ENCODE measurements at regions of chr14 and their contacts with region 1.

Region 1: DNA sequence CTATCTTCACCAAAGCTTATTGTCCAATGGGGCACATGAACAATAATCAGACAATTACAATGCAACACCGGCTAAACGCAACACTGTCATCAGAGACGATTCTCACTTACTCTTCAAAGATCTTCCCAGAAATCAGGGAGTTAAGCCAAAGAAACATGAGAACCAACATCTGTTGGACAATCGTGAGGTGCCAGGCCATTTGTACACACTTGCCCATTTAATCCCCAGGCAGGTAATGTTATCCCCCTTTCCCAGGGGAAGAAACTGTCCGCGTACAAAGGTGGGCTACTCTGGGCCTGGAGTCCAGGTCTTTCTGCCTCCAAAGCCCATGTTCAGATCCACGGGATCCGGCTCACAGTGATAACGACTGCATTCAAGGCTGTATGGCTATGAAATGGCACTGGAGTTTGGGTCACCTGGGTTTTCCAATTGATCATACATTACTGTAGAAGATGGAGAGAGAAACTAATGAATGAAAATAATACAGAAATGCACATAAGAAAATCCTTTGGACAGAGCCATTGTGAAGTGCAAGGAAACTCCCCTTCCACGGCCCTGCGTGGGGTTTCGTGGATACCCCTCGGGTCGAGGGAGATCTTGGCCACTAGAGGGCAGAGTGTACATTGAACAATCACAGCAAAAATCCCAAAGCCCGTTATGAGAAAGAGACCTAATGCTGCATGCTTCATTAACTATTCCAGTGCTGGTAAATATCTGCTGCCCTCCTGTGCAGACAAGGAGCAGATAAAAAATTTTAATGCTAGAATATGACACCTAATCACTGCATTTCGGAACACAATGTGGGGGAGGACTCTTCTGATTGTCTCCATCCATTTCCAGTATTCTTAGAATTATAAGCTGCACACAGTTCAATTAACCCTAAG is 111.4 kb downstream of the EGLN3 start:
- DNase-seq: peak; percentile 50 to 62 (median 52)
- ATAC-seq: peak; percentile 68
- H3K4me3 ChIP-seq: no peak overlapping the region
- H3K27ac ChIP-seq: no peak overlapping the region
- H3K4me1 ChIP-seq: peaks cover 6% of the 10 kb centered on the region
- H3K27me3 ChIP-seq: no peaks in the 10 kb centered on the region
- CTCF ChIP-seq: peak; percentile 70 to 80 (median 75)
- POLR2A ChIP-seq: no peak

Region 2: GRCh38 chr14:33184587-33184986 is 654.8 kb before region 1 on chr14:
- intact Hi-C with region 1: no loop called
- DNase-seq: no peak
- ATAC-seq: no peak
- H3K4me3 ChIP-seq: no peak overlapping the region
- H3K27ac ChIP-seq: no peak overlapping the region
- H3K4me1 ChIP-seq: no peaks in the 10 kb centered on the region
- H3K27me3 ChIP-seq: no peaks in the 10 kb centered on the region
- CTCF ChIP-seq: peak in 1 of 7 experiments; percentile 6
- POLR2A ChIP-seq: no peak

Region 3: DNA sequence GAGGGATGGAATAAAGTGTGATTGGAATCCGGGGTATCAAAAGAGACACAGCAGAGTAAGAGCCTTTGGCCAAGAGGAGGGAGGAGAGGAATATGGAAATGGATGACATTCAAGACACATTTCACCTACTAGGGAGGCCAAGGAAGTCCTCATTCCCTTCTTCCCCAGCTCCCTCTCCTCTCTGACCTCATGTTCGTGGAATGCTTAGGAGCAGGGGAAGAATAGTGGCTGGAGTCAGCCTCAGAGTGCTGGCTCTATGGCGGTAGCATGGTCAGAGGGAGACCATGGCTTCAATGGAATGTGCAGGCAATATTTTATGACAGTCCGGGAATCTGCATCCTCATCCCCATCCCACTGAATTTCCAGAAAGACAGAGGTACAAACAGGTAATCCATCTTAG is 85.2 kb before region 1 on chr14:
- intact Hi-C with region 1: no loop called
- DNase-seq: no peak
- ATAC-seq: no peak
- H3K4me3 ChIP-seq: no peak overlapping the region
- H3K27ac ChIP-seq: no peak overlapping the region
- H3K4me1 ChIP-seq: no peaks in the 10 kb centered on the region
- H3K27me3 ChIP-seq: no peaks in the 10 kb centered on the region
- CTCF ChIP-seq: no peak
- POLR2A ChIP-seq: no peak

Region 4: GRCh38 chr14:34098045-34098984 is 258.9 kb after region 1 on chr14:
- intact Hi-C with region 1: loop called (anchors 5 kb)
- DNase-seq: peak; percentile 35 to 44 (median 37)
- ATAC-seq: peak; percentile 63
- H3K4me3 ChIP-seq: no peak overlapping the region
- H3K27ac ChIP-seq: no peak overlapping the region
- H3K4me1 ChIP-seq: no peaks in the 10 kb centered on the region
- H3K27me3 ChIP-seq: no peaks in the 10 kb centered on the region
- CTCF ChIP-seq: peak; percentile 20 to 75 (median 65)
- POLR2A ChIP-seq: no peak

Region 5: DNA sequence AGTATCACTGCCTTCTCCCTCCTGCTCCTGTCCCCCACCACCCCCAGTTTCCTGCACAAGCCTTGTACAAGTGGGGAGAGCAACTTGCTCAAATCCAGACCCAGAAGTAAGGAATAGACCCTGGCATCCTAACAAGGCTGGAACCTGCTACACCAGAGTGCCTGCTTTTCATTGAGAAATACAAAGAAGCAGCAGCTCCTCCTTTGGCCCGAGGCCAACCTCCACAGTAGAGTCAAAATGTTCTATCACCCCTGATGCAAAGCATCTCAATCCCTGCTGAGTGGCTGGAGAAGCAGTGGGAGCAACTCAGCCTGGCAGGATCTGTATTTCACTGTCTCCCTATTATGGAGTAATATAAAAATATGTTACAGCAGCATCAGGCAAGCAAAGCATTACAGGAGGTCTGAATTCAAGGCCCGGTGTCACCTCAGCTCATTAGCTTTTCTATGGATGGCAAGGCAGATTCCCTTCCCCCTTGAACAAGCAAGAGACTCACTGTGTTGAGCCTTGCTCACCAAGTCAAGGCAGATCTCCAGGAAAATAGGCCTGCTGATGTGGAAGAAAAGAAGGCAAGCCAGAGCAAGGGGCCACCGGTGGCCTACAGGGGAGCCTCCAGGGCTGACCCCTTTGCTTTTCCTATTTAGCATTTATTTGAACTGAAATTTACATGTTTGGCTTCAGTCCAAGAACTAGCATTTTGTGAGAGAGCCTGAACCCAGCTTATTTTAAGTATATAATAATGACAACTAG is 297.7 kb after region 1 on chr14:
- intact Hi-C with region 1: no loop called
- DNase-seq: no peak
- ATAC-seq: no peak
- H3K4me3 ChIP-seq: no peak overlapping the region
- H3K27ac ChIP-seq: no peak overlapping the region
- H3K4me1 ChIP-seq: peaks cover 8% of the 10 kb centered on the region
- H3K27me3 ChIP-seq: no peaks in the 10 kb centered on the region
- CTCF ChIP-seq: no peak
- POLR2A ChIP-seq: no peak

Region 6: GRCh38 chr14:34237081-34237480 is 397.6 kb after region 1 on chr14:
- intact Hi-C with region 1: loop called (anchors 10 kb)
- DNase-seq: no peak
- ATAC-seq: no peak
- H3K4me3 ChIP-seq: no peak overlapping the region
- H3K27ac ChIP-seq: no peak overlapping the region
- H3K4me1 ChIP-seq: no peaks in the 10 kb centered on the region
- H3K27me3 ChIP-seq: no peaks in the 10 kb centered on the region
- CTCF ChIP-seq: no peak
- POLR2A ChIP-seq: no peak

Region 7: DNA sequence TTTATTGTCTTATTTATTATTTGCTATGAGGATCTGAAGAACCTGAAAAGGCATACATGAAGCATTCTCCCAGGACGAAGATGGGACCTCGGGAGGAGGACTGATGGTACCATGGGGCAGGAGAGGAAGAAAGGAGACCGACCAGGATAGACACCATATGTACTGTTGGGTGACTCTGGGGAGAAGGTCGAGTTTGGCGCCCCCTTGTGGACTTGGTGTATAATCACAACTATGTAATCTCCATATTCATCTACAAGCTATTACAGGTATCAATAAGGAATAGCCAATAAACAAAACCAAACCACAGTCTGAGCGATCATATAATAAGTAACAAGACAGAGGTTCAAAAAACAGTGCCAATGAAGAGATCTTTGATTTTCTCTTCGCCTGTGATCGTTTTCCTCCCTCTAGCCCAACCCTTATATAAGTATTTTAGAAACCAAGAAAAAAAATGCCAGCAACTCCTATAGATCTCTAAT is 483.5 kb after region 1 on chr14:
- intact Hi-C with region 1: loop called (anchors 10 kb)
- DNase-seq: peak; percentile 52 to 72 (median 62)
- ATAC-seq: peak; percentile 85
- H3K4me3 ChIP-seq: no peak overlapping the region
- H3K27ac ChIP-seq: no peak overlapping the region
- H3K4me1 ChIP-seq: peaks cover 5% of the 10 kb centered on the region
- H3K27me3 ChIP-seq: no peaks in the 10 kb centered on the region
- CTCF ChIP-seq: peak; percentile 34 to 70 (median 65)
- POLR2A ChIP-seq: no peak

Region 8: DNA sequence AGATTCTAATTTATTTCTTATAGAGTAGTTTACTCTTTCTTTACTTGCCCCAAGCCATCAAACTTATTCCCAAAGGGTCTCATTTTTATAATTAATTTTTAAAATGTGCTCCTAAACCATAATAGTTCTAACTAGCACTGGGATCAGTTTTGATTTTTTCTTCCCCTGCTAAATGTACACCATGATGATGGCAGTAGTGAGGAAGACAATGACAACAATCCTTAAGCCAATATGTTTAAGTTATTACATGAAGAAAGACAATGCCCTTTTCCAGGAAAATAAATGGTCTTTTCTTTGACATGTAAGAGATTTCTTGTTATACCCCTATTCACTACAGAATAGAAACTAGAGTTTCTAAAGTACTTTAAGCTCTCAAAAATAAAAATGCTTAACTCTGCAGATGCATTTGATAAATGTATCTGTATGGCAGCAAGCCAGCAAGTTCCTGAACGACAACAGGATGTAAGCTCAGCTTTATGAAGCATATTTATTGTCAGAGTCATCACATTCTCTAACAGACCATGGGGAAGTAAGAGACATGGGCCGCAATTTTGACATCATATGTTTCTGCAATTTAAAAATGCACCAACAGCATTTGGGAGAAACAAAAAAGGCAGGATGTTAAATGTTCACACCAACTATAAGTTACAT is 826.5 kb after region 1 on chr14:
- intact Hi-C with region 1: no loop called
- DNase-seq: peak in 3 of 4 donors; percentile 7 to 70 (median 13)
- ATAC-seq: no peak
- H3K4me3 ChIP-seq: no peak overlapping the region
- H3K27ac ChIP-seq: peak overlapping the region in 1 of 4 donors; percentile 55
- H3K4me1 ChIP-seq: no peaks in the 10 kb centered on the region
- H3K27me3 ChIP-seq: no peaks in the 10 kb centered on the region
- CTCF ChIP-seq: no peak
- POLR2A ChIP-seq: no peak

Measured in body of pancreas (tissue), 4 donors.